RWPE1 (cell line): ENCODE measurements at regions of chr2 and their contacts with region 1.

Region 1: GRCh38 chr2:162153608-162154224 is 1.7 kb upstream of the GCG start:
- DNase-seq: peak; percentile 60
- H3K27ac ChIP-seq: no peak overlapping the region
- CTCF ChIP-seq: peak; percentile 70

Region 2: GRCh38 chr2:162297925-162298552 is 144.3 kb after region 1 on chr2:
- CTCF ChIA-PET with region 1: interaction called, 30 read pairs
- POLR2A ChIA-PET with region 1: no interaction called
- DNase-seq: peak; percentile 45
- H3K27ac ChIP-seq: no peak overlapping the region
- CTCF ChIP-seq: peak; percentile 79

Region 3: GRCh38 chr2:162327134-162327769 is 173.5 kb after region 1 on chr2:
- CTCF ChIA-PET with region 1: no interaction called
- POLR2A ChIA-PET with region 1: no interaction called
- DNase-seq: no peak
- H3K27ac ChIP-seq: no peak overlapping the region
- CTCF ChIP-seq: peak; percentile 30